ENCODE measurements at regions of chr17 and their contacts with region 1.

Region 1: DNA sequence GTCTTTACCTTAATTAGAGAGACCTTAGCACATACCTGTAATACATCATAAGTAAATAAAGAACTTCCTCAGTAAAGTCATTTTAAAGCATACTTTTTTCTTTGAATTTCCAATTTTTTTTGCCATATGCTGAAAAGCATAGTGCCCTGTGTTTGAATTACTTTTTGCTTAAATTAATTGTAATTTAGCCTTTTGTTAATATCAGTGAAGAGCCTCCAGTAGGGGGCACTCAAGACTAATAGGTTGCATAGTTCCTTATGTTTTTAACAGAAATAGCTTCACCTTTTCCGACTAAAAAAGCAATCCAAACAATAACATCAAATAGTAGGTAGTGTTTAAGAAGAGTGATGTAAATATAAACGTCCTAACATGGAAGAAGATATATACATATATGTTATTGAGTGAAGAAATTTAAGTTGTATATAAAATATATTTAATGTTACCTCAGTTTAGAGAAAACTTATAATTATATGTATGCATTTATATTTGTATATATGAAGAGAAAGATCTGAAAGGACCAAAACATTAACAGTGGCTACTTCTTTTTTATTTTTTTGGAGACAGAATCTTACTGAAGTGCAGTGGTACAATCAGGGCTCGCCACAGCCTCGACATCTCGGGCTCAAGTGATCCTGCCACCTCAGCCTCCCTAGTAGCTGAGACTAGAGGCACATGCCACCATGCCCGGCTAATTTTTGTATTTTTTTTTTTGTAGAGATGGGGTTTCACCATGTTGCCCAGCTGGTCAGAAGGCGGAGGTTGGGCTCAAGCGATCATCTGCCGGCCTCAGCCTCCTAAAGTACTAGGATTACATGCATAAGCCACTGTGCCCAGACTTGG is 18.8 kb downstream of the RAD51C start:
- DNase-seq: peak in 1 of 2 experiments; percentile 71
- ATAC-seq: peak in 1 of 2 experiments; percentile 68; a peak in 3 of 6 replicates
- H3K4me3 ChIP-seq: no peak overlapping the region
- H3K27ac ChIP-seq: no peak overlapping the region
- H3K4me1 ChIP-seq: no peaks in the 10 kb centered on the region
- CTCF ChIP-seq: peak; percentile 97
- EP300 ChIP-seq: no peak
- POLR2A ChIP-seq: no peak
- RAD21 ChIP-seq: peak; percentile 89 to 97

Region 2: GRCh38 chr17:58692239-58693055 is 18.7 kb before region 1 on chr17 and contains the start of gene RAD51C:
- CTCF ChIA-PET with region 1: interaction called, 17 read pairs
- POLR2A ChIA-PET with region 1: no interaction called
- DNase-seq: peak; percentile 90 to 93
- ATAC-seq: peak; percentile 99
- H3K4me3 ChIP-seq: peak within 1 kb of the TSS; percentile 53
- H3K27ac ChIP-seq: peak within 1 kb of the TSS; percentile 65 to 85
- H3K4me1 ChIP-seq: peaks cover 19% of the 10 kb centered on the region
- CTCF ChIP-seq: no peak
- EP300 ChIP-seq: no peak
- POLR2A ChIP-seq: peak; percentile 82
- RAD21 ChIP-seq: no peak
- polyA plus RNA-seq, gene RAD51C: 96.7 and 121 TPM in 2 replicates

Region 3: GRCh38 chr17:58728786-58729185 is 17.6 kb after region 1 on chr17:
- CTCF ChIA-PET with region 1: interaction called, 10 read pairs
- POLR2A ChIA-PET with region 1: no interaction called
- DNase-seq: no peak
- ATAC-seq: no peak
- H3K4me3 ChIP-seq: no peak overlapping the region
- H3K27ac ChIP-seq: no peak overlapping the region
- H3K4me1 ChIP-seq: no peaks in the 10 kb centered on the region
- CTCF ChIP-seq: no peak
- EP300 ChIP-seq: no peak
- POLR2A ChIP-seq: no peak
- RAD21 ChIP-seq: no peak

Region 4: DNA sequence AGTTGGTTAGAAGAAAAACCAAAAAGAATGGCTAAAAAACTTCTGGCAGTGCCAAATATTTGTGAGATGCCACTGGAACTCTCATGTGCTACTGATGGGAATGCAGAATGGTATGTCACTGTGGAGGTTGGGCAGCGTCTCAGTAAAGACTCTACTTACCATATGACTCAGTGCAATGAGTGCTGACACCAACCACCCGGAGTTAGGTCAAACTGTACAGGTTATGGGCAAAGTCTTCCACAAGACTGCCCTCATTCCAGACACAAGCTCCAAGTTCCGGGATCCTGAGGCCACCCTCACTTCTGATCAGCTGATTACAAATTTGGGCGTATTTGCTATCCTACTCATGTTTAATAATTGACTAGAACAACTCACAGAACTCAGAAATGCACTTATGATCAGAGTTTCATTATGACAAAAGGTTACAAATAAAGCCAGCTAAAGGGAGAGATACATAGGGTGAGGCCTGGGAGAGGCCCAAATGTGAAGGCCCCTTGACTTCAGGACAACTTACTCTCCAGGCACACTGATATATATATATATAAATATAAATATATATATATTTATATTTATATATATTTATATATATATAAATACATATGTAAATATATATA is 280.7 kb after region 1 on chr17:
- CTCF ChIA-PET with region 1: interaction called, 10 read pairs
- POLR2A ChIA-PET with region 1: no interaction called
- DNase-seq: peak in 1 of 2 experiments; percentile 37
- ATAC-seq: peak; percentile 34 to 49; a peak in 4 of 6 replicates
- H3K4me3 ChIP-seq: no peak overlapping the region
- H3K27ac ChIP-seq: no peak overlapping the region
- H3K4me1 ChIP-seq: peaks cover 12% of the 10 kb centered on the region; the same call in 2 of the 3 replicates
- CTCF ChIP-seq: no peak
- EP300 ChIP-seq: no peak
- POLR2A ChIP-seq: no peak
- RAD21 ChIP-seq: no peak

Region 5: GRCh38 chr17:59010026-59010425 is 298.9 kb after region 1 on chr17:
- CTCF ChIA-PET with region 1: interaction called, 169 read pairs
- POLR2A ChIA-PET with region 1: interaction called, 10 read pairs
- DNase-seq: no peak
- ATAC-seq: no peak
- H3K4me3 ChIP-seq: no peak overlapping the region
- H3K27ac ChIP-seq: no peak overlapping the region
- H3K4me1 ChIP-seq: no peaks in the 10 kb centered on the region
- CTCF ChIP-seq: no peak
- EP300 ChIP-seq: no peak
- POLR2A ChIP-seq: no peak
- RAD21 ChIP-seq: no peak

Region 6: DNA sequence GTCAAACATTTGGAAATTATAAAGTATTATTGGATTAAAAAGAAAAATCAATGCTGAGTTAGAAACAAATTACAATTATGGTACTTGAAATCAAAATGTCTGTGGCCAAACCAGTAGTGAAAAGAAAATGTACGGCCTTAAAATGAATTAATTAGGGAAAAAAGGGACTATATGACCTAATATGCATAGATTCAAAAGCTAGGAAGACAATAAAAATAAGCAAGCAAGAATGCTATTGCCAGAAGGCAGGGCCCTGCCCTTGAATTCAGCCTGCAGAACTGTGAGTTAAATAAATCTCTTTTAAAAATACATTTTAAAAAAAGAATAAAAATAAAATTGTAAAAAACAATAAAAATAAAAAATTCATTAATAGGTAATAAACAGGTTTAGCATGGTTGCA is 306.9 kb after region 1 on chr17:
- CTCF ChIA-PET with region 1: interaction called, 21 read pairs
- POLR2A ChIA-PET with region 1: no interaction called
- DNase-seq: no peak
- ATAC-seq: no peak
- H3K4me3 ChIP-seq: no peak overlapping the region
- H3K27ac ChIP-seq: no peak overlapping the region
- H3K4me1 ChIP-seq: no peaks in the 10 kb centered on the region
- CTCF ChIP-seq: no peak
- EP300 ChIP-seq: no peak
- POLR2A ChIP-seq: no peak
- RAD21 ChIP-seq: no peak

Measured in A549 (cell line).